ENCODE measurements at regions of chr6 and their contacts with region 1.

Region 1: DNA sequence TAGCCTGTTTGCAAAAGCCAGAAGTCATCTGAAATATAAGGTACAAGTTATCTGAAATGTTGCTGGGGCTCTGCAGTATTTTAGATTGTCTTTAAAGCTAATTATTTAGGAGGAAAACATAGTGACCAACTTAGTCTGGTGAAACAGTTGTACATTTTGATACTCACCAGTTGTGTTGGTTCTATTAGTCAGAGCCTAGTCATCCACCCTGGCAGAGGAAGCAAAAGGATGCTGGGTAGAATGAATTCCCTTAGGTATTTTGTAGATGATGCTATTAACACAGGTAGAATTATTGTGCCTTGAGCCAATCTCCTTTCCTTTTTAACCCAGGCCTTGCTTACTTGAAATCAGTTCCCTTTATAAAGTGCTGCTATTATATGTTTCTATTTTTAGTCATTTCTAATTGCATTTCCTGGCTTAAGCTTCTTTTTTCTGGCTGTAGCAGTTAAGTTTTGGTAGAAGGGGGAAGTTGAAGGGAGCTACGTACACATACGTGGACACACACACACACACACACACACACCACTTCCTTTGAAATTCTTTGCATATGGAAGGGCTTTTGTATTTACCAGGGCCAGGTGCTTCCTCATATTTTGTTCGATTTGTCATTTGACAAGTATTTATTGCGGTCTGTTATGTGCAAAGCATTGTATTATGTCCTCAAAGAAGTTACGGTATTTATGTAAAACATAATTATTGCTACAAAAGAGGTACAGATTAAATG is 82.4 kb downstream of the RTN4IP1 start:
- DNase-seq: no peak
- H3K4me3 Mint-ChIP-seq: no peak overlapping the region
- H3K27ac Mint-ChIP-seq: peak overlapping the region; percentile 87
- H3K4me1 Mint-ChIP-seq: peaks cover 47% of the 10 kb centered on the region
- H3K27me3 Mint-ChIP-seq: no peaks in the 10 kb centered on the region

Region 2: DNA sequence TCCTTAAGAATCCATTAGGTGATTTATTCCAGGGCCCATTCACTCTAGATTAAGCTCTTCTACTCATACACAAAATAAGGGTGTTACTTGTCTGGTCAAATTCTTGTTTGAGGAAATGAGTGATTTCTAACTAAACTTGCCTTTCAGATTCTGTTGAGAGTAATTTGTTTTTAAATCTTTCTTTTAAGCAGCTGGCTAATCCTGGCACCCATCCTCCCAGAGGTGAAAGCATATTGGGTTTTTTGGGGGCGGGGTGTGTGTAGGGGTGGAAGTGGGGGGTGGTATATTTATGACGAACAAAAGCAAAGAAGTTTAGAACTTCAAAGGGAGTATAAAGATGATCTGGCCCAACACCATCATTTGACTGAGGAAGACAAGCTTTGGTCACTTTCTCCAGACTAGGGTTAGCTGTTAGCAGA is 12.3 kb before region 1 on chr6:
- CTCF ChIA-PET with region 1: interaction called, 4 read pairs
- POLR2A ChIA-PET with region 1: interaction called, 10 read pairs
- intact Hi-C with region 1: loop called (anchors 1 kb)
- DNase-seq: peak; percentile 84
- H3K4me3 Mint-ChIP-seq: peak overlapping the region; percentile 17
- H3K27ac Mint-ChIP-seq: peak overlapping the region; percentile 92
- H3K4me1 Mint-ChIP-seq: peaks cover 85% of the 10 kb centered on the region
- H3K27me3 Mint-ChIP-seq: no peaks in the 10 kb centered on the region

Region 3: GRCh38 chr6:106692112-106692818 is 145.4 kb after region 1 on chr6:
- CTCF ChIA-PET with region 1: no interaction called
- POLR2A ChIA-PET with region 1: no interaction called
- intact Hi-C with region 1: no loop called
- DNase-seq: no peak
- H3K4me3 Mint-ChIP-seq: no peak overlapping the region
- H3K27ac Mint-ChIP-seq: no peak overlapping the region
- H3K4me1 Mint-ChIP-seq: no peaks in the 10 kb centered on the region
- H3K27me3 Mint-ChIP-seq: peaks cover 3% of the 10 kb centered on the region

Region 4: DNA sequence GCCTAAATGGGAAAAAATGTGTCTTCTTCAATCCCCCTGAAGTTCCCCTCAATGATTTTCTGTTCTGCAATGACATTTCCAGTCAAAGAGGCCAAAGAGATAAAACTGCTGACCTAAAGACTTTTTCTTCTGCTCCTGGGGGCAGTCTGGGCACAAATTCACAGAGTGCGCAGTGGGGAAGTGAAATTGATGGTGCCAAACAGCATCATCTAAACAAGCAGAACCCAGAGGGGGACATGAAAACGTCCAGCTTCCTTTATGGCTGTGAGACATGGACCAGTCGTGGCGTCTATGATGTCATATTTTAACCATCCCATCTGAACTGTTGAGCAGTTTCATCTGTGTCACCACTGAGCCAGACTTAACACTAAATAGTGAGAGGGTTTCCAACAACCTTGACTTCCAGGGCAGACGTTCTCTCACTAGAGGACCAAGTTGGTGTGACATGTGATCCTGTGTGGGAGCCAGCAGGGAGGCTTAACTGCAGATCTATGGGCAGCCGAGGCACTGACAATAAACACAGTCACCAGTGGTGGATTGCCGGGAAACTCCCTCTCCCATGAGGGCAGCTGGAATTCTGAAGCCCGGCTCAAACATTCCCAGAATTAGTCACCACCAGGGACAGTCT is 1264.9 kb after region 1 on chr6:
- CTCF ChIA-PET with region 1: no interaction called
- POLR2A ChIA-PET with region 1: no interaction called
- intact Hi-C with region 1: no loop called
- DNase-seq: no peak
- H3K4me3 Mint-ChIP-seq: peak overlapping the region; percentile 14
- H3K27ac Mint-ChIP-seq: peak overlapping the region; percentile 25
- H3K4me1 Mint-ChIP-seq: peaks cover 50% of the 10 kb centered on the region
- H3K27me3 Mint-ChIP-seq: no peaks in the 10 kb centered on the region